WTC11 (cell line): ENCODE measurements at regions of chr19 and their contacts with region 1.

Region 1: DNA sequence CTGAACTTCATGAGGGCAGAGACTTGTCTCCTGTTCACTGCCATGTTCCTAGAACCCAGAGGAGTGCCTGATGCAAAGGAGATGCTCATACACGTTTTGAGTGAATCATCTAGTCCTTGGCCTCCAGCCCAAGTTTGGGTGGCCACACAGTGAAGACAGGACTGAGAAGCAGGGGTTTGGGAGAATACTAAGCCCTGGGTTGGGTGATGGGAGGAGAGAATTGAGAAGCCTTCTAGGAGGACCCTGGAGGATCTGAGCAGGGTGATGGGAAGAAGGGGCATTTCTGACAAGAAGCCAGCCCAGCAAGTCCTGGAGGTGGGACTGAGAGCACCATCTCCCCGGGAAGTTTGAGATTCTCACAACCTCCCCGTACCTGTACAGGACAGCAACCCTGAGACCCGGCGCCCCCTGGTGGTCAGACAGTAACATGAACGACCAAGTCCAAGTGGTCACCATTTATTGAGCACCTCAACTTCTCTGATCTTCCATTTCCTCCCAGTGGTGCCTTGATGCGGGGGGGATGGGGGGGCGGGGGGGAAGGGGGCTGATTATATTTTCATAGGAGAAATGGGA is 11.0 kb downstream of the CTU1 start:
- DNase-seq: peak; percentile 83
- ATAC-seq: peak; percentile 62
- H3K4me3 Mint-ChIP-seq: no peak overlapping the region
- H3K27ac Mint-ChIP-seq: no peak overlapping the region
- H3K4me1 Mint-ChIP-seq: peaks cover 15% of the 10 kb centered on the region
- H3K27me3 Mint-ChIP-seq: no peaks in the 10 kb centered on the region
- CTCF ChIP-seq: peak; percentile 80

Region 2: GRCh38 chr19:50705422-50706019 is 391.7 kb before region 1 on chr19:
- CTCF ChIA-PET with region 1: interaction called, 10 read pairs
- POLR2A ChIA-PET with region 1: no interaction called
- DNase-seq: peak; percentile 62
- ATAC-seq: peak; percentile 82
- H3K4me3 Mint-ChIP-seq: no peak overlapping the region
- H3K27ac Mint-ChIP-seq: no peak overlapping the region
- H3K4me1 Mint-ChIP-seq: peaks cover 9% of the 10 kb centered on the region; the same call in 1 of the 2 replicates
- H3K27me3 Mint-ChIP-seq: peaks cover 38% of the 10 kb centered on the region
- CTCF ChIP-seq: peak; percentile 37

Region 3: DNA sequence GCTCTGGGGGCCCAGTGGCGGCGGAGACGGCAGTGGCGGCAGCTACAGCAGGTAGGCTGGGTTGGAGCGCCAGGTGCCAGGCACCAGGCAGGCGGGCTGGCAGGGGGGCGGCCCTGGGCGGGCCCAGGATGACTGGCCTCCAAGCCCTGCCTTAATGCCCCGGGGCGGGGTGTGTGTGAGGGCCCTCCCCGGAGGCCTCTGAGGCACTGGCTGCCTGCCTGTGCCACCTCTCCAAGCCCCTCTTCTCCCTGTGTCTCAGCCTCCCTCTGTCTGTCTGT is 70.8 kb before region 1 on chr19 and contains the start of gene KLK11:
- CTCF ChIA-PET with region 1: interaction called, 347 read pairs
- POLR2A ChIA-PET with region 1: interaction called, 4 read pairs
- DNase-seq: no peak
- ATAC-seq: no peak
- H3K4me3 Mint-ChIP-seq: no peak within 1 kb of the TSS
- H3K27ac Mint-ChIP-seq: no peak within 1 kb of the TSS
- H3K4me1 Mint-ChIP-seq: peaks cover 40% of the 10 kb centered on the region
- H3K27me3 Mint-ChIP-seq: no peaks in the 10 kb centered on the region; the same call in 1 of the 2 replicates
- CTCF ChIP-seq: no peak
- total RNA-seq, gene KLK11: 0.23 to 0.55 TPM (median 0.27 TPM) in 3 replicates

Region 4: DNA sequence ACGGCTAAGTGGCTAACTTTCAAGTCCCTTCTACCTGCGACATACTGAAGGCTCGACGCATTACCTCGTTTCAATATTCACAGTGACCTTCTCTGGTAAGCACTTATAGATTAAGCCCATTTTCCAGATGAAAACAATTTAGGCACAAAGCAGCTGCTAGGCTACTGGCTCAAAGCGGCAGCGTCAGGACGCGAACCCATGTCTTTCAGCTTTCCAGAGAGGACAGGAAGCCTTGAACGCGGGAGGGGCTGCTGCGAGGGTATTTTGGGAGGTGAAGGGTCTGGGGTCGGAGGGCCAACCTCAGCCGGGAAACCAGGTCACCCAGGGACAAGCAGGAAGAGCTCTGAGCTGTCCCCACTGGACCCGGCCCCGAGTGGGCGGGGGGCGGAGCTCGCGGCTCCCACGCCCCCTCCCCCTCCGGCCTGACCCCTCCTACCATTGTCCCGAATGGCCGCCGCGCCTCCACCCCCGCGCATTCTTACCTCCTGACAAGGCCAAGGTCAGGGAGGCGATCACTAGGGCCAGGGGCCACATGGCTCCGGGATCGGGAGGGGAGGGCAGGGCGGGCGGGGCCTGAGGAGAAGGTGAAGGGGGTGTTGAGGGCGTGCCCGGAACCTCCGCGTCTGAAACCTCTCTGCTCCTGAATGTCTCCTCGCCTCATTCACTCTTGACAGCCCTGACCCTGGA is 32.6 kb before region 1 on chr19 and contains the start of gene KLK13:
- CTCF ChIA-PET with region 1: interaction called, 10 read pairs
- POLR2A ChIA-PET with region 1: no interaction called
- DNase-seq: peak; percentile 69
- ATAC-seq: peak; percentile 81
- H3K4me3 Mint-ChIP-seq: peak within 1 kb of the TSS; percentile 76
- H3K27ac Mint-ChIP-seq: no peak within 1 kb of the TSS
- H3K4me1 Mint-ChIP-seq: peaks cover 8% of the 10 kb centered on the region
- H3K27me3 Mint-ChIP-seq: peaks cover 10% of the 10 kb centered on the region
- CTCF ChIP-seq: no peak
- total RNA-seq, gene KLK13: 3.1 to 5.0 TPM (median 4.5 TPM) in 3 replicates

Region 5: GRCh38 chr19:51086153-51086850 is 10.9 kb before region 1 on chr19:
- CTCF ChIA-PET with region 1: interaction called, 20 read pairs
- POLR2A ChIA-PET with region 1: no interaction called
- DNase-seq: no peak
- ATAC-seq: no peak
- H3K4me3 Mint-ChIP-seq: no peak overlapping the region
- H3K27ac Mint-ChIP-seq: 0 out of 2 replicates have a peak overlapping the region, but pooled peaks have one; percentile 63
- H3K4me1 Mint-ChIP-seq: peaks cover 20% of the 10 kb centered on the region
- H3K27me3 Mint-ChIP-seq: no peaks in the 10 kb centered on the region
- CTCF ChIP-seq: no peak

Region 6: GRCh38 chr19:51119101-51119500 is 21.8 kb after region 1 on chr19:
- CTCF ChIA-PET with region 1: no interaction called
- POLR2A ChIA-PET with region 1: no interaction called
- DNase-seq: no peak
- ATAC-seq: peak; percentile 60
- H3K4me3 Mint-ChIP-seq: no peak overlapping the region
- H3K27ac Mint-ChIP-seq: no peak overlapping the region
- H3K4me1 Mint-ChIP-seq: no peaks in the 10 kb centered on the region; the same call in 1 of the 2 replicates
- H3K27me3 Mint-ChIP-seq: peaks cover 25% of the 10 kb centered on the region
- CTCF ChIP-seq: no peak